Psoas muscle (tissue), 8 donors: ENCODE measurements at regions of chr17 and their contacts with region 1.

Region 1: GRCh38 chr17:34733333-34733732 is 154.0 kb downstream of the TMEM132E start:
- DNase-seq: no peak
- ATAC-seq: no peak
- H3K4me3 ChIP-seq: no peak overlapping the region
- H3K27ac ChIP-seq: no peak overlapping the region
- H3K4me1 ChIP-seq: no peaks in the 10 kb centered on the region
- H3K27me3 ChIP-seq: peaks cover 0 to 6% (median 3%) of the 10 kb centered on the region in 3 donors
- CTCF ChIP-seq: no peak

Region 2: GRCh38 chr17:34645594-34645993 is 87.7 kb before region 1 on chr17:
- intact Hi-C with region 1: no loop called
- DNase-seq: no peak
- ATAC-seq: no peak
- H3K4me3 ChIP-seq: no peak overlapping the region
- H3K27ac ChIP-seq: no peak overlapping the region
- H3K4me1 ChIP-seq: no peaks in the 10 kb centered on the region
- H3K27me3 ChIP-seq: peaks cover 0 to 26% (median 0%) of the 10 kb centered on the region in 3 donors
- CTCF ChIP-seq: no peak

Region 3: DNA sequence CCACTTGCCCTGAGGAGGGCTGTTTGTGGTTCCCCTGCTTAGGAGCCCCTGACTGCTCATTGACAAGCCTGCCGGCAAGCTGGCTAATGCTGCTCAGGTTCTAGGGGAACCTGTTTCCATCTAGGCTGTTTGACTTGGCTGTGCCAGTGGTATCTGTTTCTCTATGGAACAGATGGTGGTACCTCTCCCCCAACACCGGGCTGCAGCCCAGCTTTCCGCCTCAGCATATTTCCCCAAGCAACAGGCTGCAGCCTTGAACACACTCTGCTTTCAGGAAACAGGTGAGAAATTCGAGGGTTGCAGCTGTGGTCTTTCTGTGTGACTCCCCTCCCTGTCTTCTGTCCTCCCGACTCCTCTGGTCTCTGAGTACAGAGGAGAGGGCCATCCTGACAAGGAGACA is 21.7 kb before region 1 on chr17:
- intact Hi-C with region 1: loop called in 1 of 2 experiments (anchors 2 kb)
- DNase-seq: no peak
- ATAC-seq: no peak
- H3K4me3 ChIP-seq: no peak overlapping the region
- H3K27ac ChIP-seq: no peak overlapping the region
- H3K4me1 ChIP-seq: no peaks in the 10 kb centered on the region
- H3K27me3 ChIP-seq: peaks cover 0 to 6% (median 0%) of the 10 kb centered on the region in 3 donors
- CTCF ChIP-seq: no peak